ENCODE measurements at regions of chr6 and their contacts with region 1.

Region 1: GRCh38 chr6:31958741-31959739 is at the starts of genes NELFE and SKIC2:
- DNase-seq: peak; percentile 98 to 100 (median 98)
- H3K4me3 ChIP-seq: peak within 1 kb of the TSS; percentile 96
- H3K27ac ChIP-seq: peak within 1 kb of the TSS; percentile 65 to 74
- H3K4me1 ChIP-seq: peaks cover 7% of the 10 kb centered on the region
- H3K27me3 ChIP-seq: no peaks in the 10 kb centered on the region
- CTCF ChIP-seq: no peak
- EP300 ChIP-seq: peak; percentile 69
- POLR2A ChIP-seq: peak; percentile 55
- total RNA-seq, gene NELFE: 59.2 to 75.0 (median 65.8) TPM
- total RNA-seq, gene SKIC2: 37.2 to 59.4 (median 51.5) TPM

Region 2: DNA sequence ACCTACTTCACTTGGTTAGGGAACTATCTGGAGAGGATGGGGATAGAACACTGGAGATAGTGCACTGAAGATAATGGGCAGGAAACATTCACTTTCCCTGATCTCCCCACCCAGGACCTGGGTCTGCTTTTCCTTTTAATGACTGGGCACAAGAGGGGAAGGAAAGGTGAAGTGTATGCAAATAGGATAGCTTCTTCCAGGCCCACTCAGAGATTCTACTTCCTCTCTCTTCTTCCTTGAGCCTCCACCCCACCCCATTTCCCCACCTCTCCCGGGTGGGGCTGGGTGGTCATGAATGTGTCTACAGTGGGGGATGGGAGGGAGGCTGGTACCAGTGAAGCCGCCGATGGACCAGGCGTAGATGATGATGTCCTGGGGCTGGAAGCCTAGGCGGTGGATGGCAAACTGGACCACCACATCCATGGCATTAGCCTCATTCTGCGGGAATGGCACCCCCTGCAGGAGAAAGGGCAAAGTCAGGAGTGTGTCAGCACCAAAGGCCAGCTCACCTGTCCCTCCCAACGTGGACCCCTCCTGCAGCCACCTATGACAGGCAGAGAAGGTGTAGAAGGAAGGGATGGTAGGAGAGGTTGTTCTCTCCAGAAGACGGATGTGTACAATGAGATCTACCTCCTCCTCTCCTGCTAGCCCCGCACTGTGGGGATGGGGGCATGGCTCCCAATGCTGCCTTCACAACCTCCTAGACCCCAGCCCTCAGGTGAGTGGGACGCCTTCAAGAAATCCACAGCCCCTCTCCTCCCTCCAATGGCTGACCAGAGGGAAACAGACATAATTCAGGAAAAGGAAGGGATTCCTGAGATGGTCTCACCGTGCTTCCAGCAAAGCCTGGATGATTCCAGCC is 269.6 kb before region 1 on chr6:
- intact Hi-C with region 1: no loop called
- DNase-seq: no peak
- H3K4me3 ChIP-seq: no peak overlapping the region
- H3K27ac ChIP-seq: no peak overlapping the region
- H3K4me1 ChIP-seq: no peaks in the 10 kb centered on the region
- H3K27me3 ChIP-seq: no peaks in the 10 kb centered on the region
- CTCF ChIP-seq: no peak
- EP300 ChIP-seq: no peak
- POLR2A ChIP-seq: no peak

Region 3: GRCh38 chr6:31815025-31815838 is 143.8 kb before region 1 on chr6 and contains the starts of genes HSPA1A and HSPA1L:
- intact Hi-C with region 1: no loop called
- DNase-seq: peak; percentile 91 to 96 (median 94)
- H3K4me3 ChIP-seq: peak within 1 kb of the TSS; percentile 59
- H3K27ac ChIP-seq: peak within 1 kb of the TSS; percentile 95 to 99
- H3K4me1 ChIP-seq: peaks cover 2% of the 10 kb centered on the region
- H3K27me3 ChIP-seq: no peaks in the 10 kb centered on the region
- CTCF ChIP-seq: peak in 1 of 3 donors; percentile 19
- EP300 ChIP-seq: peak; percentile 12
- POLR2A ChIP-seq: peak; percentile 99
- total RNA-seq, gene HSPA1A: 51.5 to 340 (median 140) TPM
- total RNA-seq, gene HSPA1L: 1.3 to 6.1 (median 3.9) TPM

Region 4: GRCh38 chr6:31901953-31902643 is 56.9 kb before region 1 on chr6 and contains the start of gene ZBTB12:
- intact Hi-C with region 1: loop called in 3 of 4 experiments (anchors 5 to 10 kb)
- DNase-seq: peak; percentile 96 to 97 (median 96)
- H3K4me3 ChIP-seq: peak within 1 kb of the TSS; percentile 61
- H3K27ac ChIP-seq: peak within 1 kb of the TSS; percentile 43 to 66
- H3K4me1 ChIP-seq: peaks cover 8% of the 10 kb centered on the region
- H3K27me3 ChIP-seq: no peaks in the 10 kb centered on the region
- CTCF ChIP-seq: peak in 2 of 3 donors; percentile 5 to 13
- EP300 ChIP-seq: no peak
- POLR2A ChIP-seq: peak; percentile 64
- total RNA-seq, gene ZBTB12: 1.9 to 24.8 (median 10.8) TPM

Region 5: GRCh38 chr6:32853541-32854375 is 894.7 kb after region 1 on chr6 and contains the starts of genes PSMB9 and TAP1:
- intact Hi-C with region 1: no loop called
- DNase-seq: peak; percentile 91 to 96 (median 93)
- H3K4me3 ChIP-seq: peak within 1 kb of the TSS; percentile 94
- H3K27ac ChIP-seq: peak within 1 kb of the TSS; percentile 98
- H3K4me1 ChIP-seq: peaks cover 10% of the 10 kb centered on the region
- H3K27me3 ChIP-seq: no peaks in the 10 kb centered on the region
- CTCF ChIP-seq: peak; percentile 75 to 93 (median 91)
- EP300 ChIP-seq: peak; percentile 87
- POLR2A ChIP-seq: peak; percentile 92
- total RNA-seq, gene PSMB9: 9.5 to 28.3 (median 20.4) TPM
- total RNA-seq, gene TAP1: 17.7 to 30.7 (median 23.3) TPM

Measured in ovary (tissue), 10 donors.